Activated CD4-positive, alpha-beta memory T cell treated with anti-CD3 and anti-CD28 coated beads for 36 hours (primary cell): ENCODE measurements at regions of chr15 and their contacts with region 1.

Region 1: DNA sequence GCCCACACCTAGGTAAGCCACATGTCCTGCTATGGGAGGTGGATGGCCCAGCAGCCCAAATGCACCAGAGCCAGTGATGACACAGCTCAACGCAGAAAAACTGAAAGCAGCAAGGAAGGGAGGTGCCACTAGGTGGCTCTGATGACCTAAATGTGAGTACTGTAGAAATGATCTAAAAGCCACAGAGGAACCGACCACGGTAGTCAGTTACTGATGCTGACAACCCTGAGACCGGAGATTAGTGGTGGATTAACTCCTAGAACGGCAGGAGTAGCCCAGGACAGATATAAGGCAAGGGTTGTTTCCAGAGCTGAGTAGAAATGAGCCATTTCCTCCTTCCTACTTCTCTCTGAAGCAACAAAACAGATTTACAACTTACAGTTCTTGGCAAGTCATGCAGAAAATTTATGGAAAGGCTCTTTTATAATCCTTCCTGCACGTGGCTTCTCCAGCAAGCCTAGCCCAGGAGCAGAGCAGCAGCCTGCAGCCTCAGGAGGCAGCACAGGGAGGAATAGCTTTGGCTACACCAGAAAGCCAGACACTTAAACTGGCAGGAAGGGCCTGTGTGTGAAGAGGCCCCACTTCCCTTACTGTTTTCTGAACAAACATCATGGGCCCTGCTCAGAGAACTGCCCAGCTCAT is 13.1 kb downstream of the FBXL22 start:
- DNase-seq: peak; percentile 89
- H3K4me3 Mint-ChIP-seq: no peak overlapping the region
- H3K27ac Mint-ChIP-seq: peak overlapping the region; percentile 86
- H3K4me1 Mint-ChIP-seq: peaks cover 31% of the 10 kb centered on the region
- H3K27me3 Mint-ChIP-seq: no peaks in the 10 kb centered on the region

Region 2: DNA sequence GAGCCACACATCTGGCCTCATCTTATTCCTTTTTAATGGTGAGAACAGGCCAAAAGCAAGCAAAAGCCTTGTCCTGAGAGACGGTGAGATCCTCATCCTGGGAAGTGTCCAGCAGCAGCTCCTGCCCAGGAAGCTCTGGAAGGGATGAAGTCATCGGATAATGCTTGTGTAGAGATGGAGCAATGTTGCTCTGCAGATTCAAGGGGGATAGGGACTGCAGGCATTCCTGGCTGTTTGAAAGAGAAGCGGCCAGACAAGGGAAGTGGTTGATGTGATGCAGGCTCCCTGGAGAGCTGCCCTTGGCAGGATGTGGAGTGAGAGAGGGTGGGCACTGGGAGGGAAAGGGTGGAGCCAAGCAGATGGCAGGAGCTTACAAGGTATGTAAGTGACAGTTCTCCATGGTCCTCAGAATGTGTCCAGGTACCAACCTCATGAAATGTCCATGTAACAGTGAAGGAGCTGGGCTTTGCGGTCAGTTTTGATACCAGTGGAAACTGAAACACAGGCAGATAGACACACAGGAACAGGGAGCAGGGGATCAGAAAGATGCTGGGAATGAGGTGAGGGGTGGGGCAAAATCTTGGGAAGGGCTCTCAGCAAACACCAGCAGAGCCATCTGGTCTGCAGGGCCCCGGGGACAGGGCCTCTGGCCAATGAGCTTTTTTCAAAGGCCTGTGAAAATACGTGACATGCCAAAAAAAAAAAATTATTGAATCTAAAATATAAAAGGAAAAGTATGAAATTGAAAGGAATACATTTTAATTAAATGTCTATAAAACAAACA is 520.9 kb before region 1 on chr15:
- CTCF ChIA-PET with region 1: no interaction called
- POLR2A ChIA-PET with region 1: no interaction called
- intact Hi-C with region 1: no loop called
- DNase-seq: no peak
- H3K4me3 Mint-ChIP-seq: no peak overlapping the region
- H3K27ac Mint-ChIP-seq: no peak overlapping the region
- H3K4me1 Mint-ChIP-seq: no peaks in the 10 kb centered on the region
- H3K27me3 Mint-ChIP-seq: no peaks in the 10 kb centered on the region

Region 3: DNA sequence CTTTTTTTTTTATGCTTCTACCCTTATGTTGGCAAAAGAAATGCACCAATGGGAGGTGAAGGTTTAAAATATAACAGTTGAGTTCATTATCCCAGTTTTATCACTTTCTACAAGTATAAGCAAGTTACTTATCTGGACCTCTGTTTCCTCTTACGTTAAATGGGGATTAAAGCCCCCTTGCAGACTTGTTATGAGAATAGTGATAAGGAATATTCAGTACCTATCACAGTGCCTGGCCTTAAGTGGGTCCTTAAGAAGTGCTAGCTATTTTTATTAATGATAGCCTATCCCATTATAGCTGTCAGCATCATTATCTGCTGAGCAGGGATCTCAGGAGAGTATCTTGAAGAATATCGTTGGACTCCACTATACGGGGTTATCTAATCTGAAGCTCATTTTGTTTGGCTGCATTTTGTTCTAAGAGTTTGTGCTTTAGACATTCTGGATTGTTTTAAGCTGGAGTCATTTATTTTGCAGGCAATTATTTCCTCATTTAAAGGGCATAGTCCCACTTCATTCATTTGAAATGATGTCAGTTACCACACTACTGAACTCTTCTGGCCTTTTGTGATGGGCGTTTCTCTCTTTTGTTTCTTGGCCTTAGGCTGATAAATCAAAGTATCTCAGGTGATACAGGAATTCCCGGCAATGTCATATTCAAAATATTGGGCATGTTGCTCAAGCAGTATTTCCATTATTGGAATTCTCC is 392.1 kb before region 1 on chr15:
- CTCF ChIA-PET with region 1: no interaction called
- POLR2A ChIA-PET with region 1: no interaction called
- intact Hi-C with region 1: no loop called
- DNase-seq: no peak
- H3K4me3 Mint-ChIP-seq: no peak overlapping the region
- H3K27ac Mint-ChIP-seq: peak overlapping the region; percentile 14
- H3K4me1 Mint-ChIP-seq: peaks cover 70% of the 10 kb centered on the region
- H3K27me3 Mint-ChIP-seq: no peaks in the 10 kb centered on the region

Region 4: GRCh38 chr15:63582718-63583426 is 27.4 kb before region 1 on chr15:
- CTCF ChIA-PET with region 1: no interaction called
- POLR2A ChIA-PET with region 1: no interaction called
- intact Hi-C with region 1: no loop called
- DNase-seq: peak; percentile 40
- H3K4me3 Mint-ChIP-seq: no peak overlapping the region
- H3K27ac Mint-ChIP-seq: peak overlapping the region; percentile 69
- H3K4me1 Mint-ChIP-seq: peaks cover 20% of the 10 kb centered on the region
- H3K27me3 Mint-ChIP-seq: no peaks in the 10 kb centered on the region

Region 5: GRCh38 chr15:63655683-63656372 is 45.5 kb after region 1 on chr15:
- CTCF ChIA-PET with region 1: no interaction called
- POLR2A ChIA-PET with region 1: no interaction called
- intact Hi-C with region 1: no loop called
- DNase-seq: no peak
- H3K4me3 Mint-ChIP-seq: no peak overlapping the region
- H3K27ac Mint-ChIP-seq: peak overlapping the region; percentile 36
- H3K4me1 Mint-ChIP-seq: peaks cover 7% of the 10 kb centered on the region
- H3K27me3 Mint-ChIP-seq: no peaks in the 10 kb centered on the region

Region 6: GRCh38 chr15:63668601-63669000 is 58.3 kb after region 1 on chr15:
- CTCF ChIA-PET with region 1: interaction called, 6 read pairs
- POLR2A ChIA-PET with region 1: no interaction called
- intact Hi-C with region 1: loop called (anchors 5 kb)
- DNase-seq: no peak
- H3K4me3 Mint-ChIP-seq: peak overlapping the region; percentile 40
- H3K27ac Mint-ChIP-seq: peak overlapping the region; percentile 66
- H3K4me1 Mint-ChIP-seq: peaks cover 53% of the 10 kb centered on the region
- H3K27me3 Mint-ChIP-seq: no peaks in the 10 kb centered on the region

Region 7: DNA sequence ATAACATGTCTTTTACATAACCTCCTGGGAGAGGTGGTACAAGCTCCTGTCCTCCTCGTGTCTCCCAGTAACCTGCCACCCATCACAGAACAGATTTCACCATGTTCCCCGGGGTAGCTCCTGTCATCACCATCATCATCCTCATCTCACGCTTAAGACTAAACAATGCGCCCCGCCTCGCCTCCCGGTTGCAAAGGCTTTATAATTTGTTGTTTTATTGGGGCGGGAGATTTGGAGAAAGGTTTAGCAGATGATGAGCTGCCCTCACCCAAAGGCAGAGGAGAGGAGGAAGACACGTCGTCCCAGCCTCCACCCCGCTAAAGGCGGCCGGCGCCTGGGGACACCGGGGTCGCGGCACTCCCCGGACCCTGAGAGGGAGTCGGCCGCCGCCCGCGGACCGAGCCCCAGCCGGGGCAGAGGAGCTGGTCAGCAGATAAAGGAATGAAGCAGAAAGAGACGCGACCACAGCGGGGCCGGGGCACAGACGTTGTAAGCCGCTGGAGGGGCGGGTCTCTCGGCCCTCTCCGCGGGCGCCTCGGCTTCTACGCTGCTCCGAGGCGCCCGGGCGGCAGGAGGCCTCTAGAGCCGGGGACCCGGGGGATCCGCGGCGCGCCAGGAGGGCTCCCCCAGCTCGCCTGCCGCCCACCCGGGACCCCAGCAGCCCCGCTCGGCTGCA is 222.8 kb after region 1 on chr15:
- CTCF ChIA-PET with region 1: interaction called, 3 read pairs
- POLR2A ChIA-PET with region 1: no interaction called
- intact Hi-C with region 1: loop called (anchors 5 kb)
- DNase-seq: peak; percentile 46
- H3K4me3 Mint-ChIP-seq: peak overlapping the region; percentile 96
- H3K27ac Mint-ChIP-seq: peak overlapping the region; percentile 66
- H3K4me1 Mint-ChIP-seq: peaks cover 44% of the 10 kb centered on the region
- H3K27me3 Mint-ChIP-seq: no peaks in the 10 kb centered on the region

Region 8: GRCh38 chr15:64010719-64011118 is 400.4 kb after region 1 on chr15:
- CTCF ChIA-PET with region 1: no interaction called
- POLR2A ChIA-PET with region 1: no interaction called
- intact Hi-C with region 1: loop called (anchors 2 kb)
- DNase-seq: peak; percentile 92
- H3K4me3 Mint-ChIP-seq: peak overlapping the region; percentile 5
- H3K27ac Mint-ChIP-seq: peak overlapping the region; percentile 83
- H3K4me1 Mint-ChIP-seq: peaks cover 42% of the 10 kb centered on the region
- H3K27me3 Mint-ChIP-seq: no peaks in the 10 kb centered on the region